ENCODE measurements at regions of chr19 and their contacts with region 1.

Region 1: GRCh38 chr19:6372594-6373095 is at the start of gene ALKBH7:
- DNase-seq: peak; percentile 75 to 99
- ATAC-seq: peak; percentile 87 to 93
- H3K4me3 ChIP-seq: peak within 1 kb of the TSS; percentile 99
- H3K27ac ChIP-seq: peak within 1 kb of the TSS; percentile 95
- H3K4me1 ChIP-seq: peaks cover 7% of the 10 kb centered on the region; the same call in 2 of the 3 replicates
- CTCF ChIP-seq: no peak
- EP300 ChIP-seq: no peak
- POLR2A ChIP-seq: peak; percentile 27; the same call in 1 of the 2 replicates
- RAD21 ChIP-seq: no peak
- polyA plus RNA-seq, gene ALKBH7: 9.9 and 10.2 TPM in 2 replicates

Region 2: GRCh38 chr19:6319376-6319775 is 53.3 kb before region 1 on chr19:
- CTCF ChIA-PET with region 1: no interaction called
- POLR2A ChIA-PET with region 1: no interaction called
- DNase-seq: no peak
- ATAC-seq: peak; percentile 32 to 62; a peak in 3 of 6 replicates
- H3K4me3 ChIP-seq: no peak overlapping the region
- H3K27ac ChIP-seq: no peak overlapping the region
- H3K4me1 ChIP-seq: no peaks in the 10 kb centered on the region
- CTCF ChIP-seq: no peak
- EP300 ChIP-seq: no peak
- POLR2A ChIP-seq: no peak
- RAD21 ChIP-seq: no peak

Region 3: GRCh38 chr19:6333440-6333839 is 39.2 kb before region 1 on chr19 and contains the start of gene ACER1:
- CTCF ChIA-PET with region 1: no interaction called
- POLR2A ChIA-PET with region 1: no interaction called
- DNase-seq: no peak
- ATAC-seq: no peak; a peak in 1 of 6 replicates
- H3K4me3 ChIP-seq: no peak within 1 kb of the TSS
- H3K27ac ChIP-seq: no peak within 1 kb of the TSS
- H3K4me1 ChIP-seq: no peaks in the 10 kb centered on the region
- CTCF ChIP-seq: no peak
- EP300 ChIP-seq: no peak
- POLR2A ChIP-seq: no peak
- RAD21 ChIP-seq: no peak
- polyA plus RNA-seq, gene ACER1: not detected in 2 replicates

Region 4: DNA sequence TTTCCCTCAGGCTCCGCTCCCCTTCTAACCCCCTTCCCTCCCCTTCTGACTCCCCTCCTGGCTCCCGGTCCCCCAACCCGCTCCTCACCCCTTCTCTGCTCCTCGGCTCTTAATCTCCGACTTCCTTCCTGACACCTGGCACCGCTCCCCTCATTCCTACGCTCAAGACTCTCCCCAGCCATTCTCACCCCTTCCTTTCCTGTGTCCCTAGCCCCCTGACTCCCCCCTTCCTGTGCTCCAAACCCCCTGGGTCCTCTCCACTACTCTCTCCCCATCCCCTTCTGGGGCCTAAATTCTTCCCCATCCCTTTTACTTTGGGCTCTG is 10.7 kb before region 1 on chr19:
- CTCF ChIA-PET with region 1: no interaction called
- POLR2A ChIA-PET with region 1: interaction called, 16 read pairs
- DNase-seq: no peak
- ATAC-seq: no peak; a peak in 1 of 6 replicates
- H3K4me3 ChIP-seq: peak overlapping the region; percentile 73
- H3K27ac ChIP-seq: peak overlapping the region; percentile 92 to 93
- H3K4me1 ChIP-seq: peaks cover 7% of the 10 kb centered on the region; the same call in 1 of the 3 replicates
- CTCF ChIP-seq: no peak
- EP300 ChIP-seq: no peak
- POLR2A ChIP-seq: no peak
- RAD21 ChIP-seq: no peak

Region 5: GRCh38 chr19:6393074-6393983 is 20.7 kb after region 1 on chr19 and contains the start of gene GTF2F1:
- CTCF ChIA-PET with region 1: no interaction called
- POLR2A ChIA-PET with region 1: interaction called, 10 read pairs
- DNase-seq: peak; percentile 93 to 94
- ATAC-seq: peak; percentile 93 to 94
- H3K4me3 ChIP-seq: peak within 1 kb of the TSS; percentile 87
- H3K27ac ChIP-seq: peak within 1 kb of the TSS; percentile 85 to 100
- H3K4me1 ChIP-seq: peaks cover 6% of the 10 kb centered on the region; the same call in 1 of the 3 replicates
- CTCF ChIP-seq: no peak
- EP300 ChIP-seq: no peak
- POLR2A ChIP-seq: peak; percentile 29
- RAD21 ChIP-seq: no peak
- polyA plus RNA-seq, gene GTF2F1: 32.1 and 39.0 TPM in 2 replicates